ENCODE measurements at regions of chr12 and their contacts with region 1.

Region 1: DNA sequence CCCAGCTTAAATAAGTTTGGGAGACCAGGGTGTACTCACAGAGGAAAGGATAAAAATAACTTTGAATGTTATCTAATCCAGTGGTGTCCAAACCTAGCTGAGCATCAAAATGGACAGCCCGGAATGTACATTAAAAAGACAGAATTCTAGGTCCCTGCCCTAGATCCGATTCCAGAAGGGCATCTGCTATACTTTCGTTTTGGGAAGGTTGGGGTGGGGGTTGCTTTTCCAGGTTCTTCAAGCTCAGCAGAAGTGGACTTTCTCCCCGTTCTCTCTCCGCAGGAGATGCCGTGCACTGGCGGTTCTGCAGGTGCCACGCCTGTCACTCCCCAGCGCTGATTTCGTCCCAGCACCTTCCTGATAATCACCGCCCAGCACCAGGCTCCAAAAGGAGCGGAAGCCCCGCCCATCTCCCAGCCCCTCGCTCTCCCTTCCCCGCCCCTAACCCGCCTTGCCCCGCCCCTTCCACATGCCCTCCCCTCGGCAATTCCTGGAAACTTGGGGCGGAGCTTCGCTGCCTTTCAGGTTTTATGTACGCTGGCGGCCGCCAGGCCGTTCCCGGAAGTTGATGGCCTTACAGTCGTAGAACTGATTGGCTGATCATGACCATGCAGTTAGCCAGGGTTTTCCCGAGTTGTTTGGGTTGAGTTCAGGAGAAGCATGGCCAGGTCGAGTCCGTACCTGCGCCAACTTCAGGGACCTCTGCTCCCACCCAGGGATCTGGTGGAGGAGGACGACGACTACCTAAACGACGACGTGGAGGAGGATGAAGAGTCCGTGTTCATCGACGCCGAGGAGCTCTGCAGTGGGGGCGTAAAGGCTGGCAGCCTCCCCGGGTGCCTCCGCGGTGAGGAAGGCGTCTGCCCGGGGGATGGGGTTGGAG is at the start of gene HELB:
- DNase-seq: peak; percentile 95 to 98
- H3K4me3 ChIP-seq: peak within 1 kb of the TSS; percentile 49
- H3K4me3 Mint-ChIP-seq: peak within 1 kb of the TSS; percentile 95
- H3K27ac Mint-ChIP-seq: peak within 1 kb of the TSS; percentile 92
- H3K4me1 ChIP-seq: peaks cover 4% of the 10 kb centered on the region; the same call in 1 of the 2 replicates
- H3K4me1 Mint-ChIP-seq: peaks cover 12% of the 10 kb centered on the region
- H3K27me3 ChIP-seq: no peaks in the 10 kb centered on the region
- H3K27me3 Mint-ChIP-seq: peaks cover 17% of the 10 kb centered on the region
- CTCF ChIP-seq: no peak
- total RNA-seq, gene HELB: 3.4 and 3.9 TPM in 2 replicates

Region 2: DNA sequence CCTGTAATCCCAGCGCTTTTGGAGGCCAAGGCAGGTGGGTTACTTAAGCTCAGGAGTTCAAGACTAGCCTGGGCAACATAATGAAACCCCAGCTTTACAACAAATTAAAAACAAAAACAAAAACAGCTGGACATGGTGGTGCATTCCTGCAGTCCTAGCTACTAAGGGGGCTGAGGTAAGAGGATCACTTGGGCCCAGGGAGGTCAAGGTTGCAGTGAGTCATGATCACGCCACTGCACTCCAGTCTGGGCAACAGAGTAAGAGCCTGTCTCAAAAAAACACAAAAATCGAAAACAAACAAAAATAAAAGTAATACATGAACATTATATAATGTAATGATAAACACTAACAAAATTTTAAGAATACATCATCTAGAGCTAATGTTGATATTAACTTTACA is 422.8 kb after region 1 on chr12:
- CTCF ChIA-PET with region 1: no interaction called
- POLR2A ChIA-PET with region 1: interaction called, 10 read pairs
- intact Hi-C with region 1: no loop called
- DNase-seq: no peak
- H3K4me3 ChIP-seq: no peak overlapping the region
- H3K4me3 Mint-ChIP-seq: no peak overlapping the region
- H3K27ac Mint-ChIP-seq: no peak overlapping the region
- H3K4me1 ChIP-seq: no peaks in the 10 kb centered on the region
- H3K4me1 Mint-ChIP-seq: no peaks in the 10 kb centered on the region
- H3K27me3 ChIP-seq: no peaks in the 10 kb centered on the region
- H3K27me3 Mint-ChIP-seq: peaks cover 9% of the 10 kb centered on the region
- CTCF ChIP-seq: no peak

Measured in Caco-2 (cell line).